HEK293 (cell line): ENCODE measurements at regions of chr4 and their contacts with region 1.

Region 1: DNA sequence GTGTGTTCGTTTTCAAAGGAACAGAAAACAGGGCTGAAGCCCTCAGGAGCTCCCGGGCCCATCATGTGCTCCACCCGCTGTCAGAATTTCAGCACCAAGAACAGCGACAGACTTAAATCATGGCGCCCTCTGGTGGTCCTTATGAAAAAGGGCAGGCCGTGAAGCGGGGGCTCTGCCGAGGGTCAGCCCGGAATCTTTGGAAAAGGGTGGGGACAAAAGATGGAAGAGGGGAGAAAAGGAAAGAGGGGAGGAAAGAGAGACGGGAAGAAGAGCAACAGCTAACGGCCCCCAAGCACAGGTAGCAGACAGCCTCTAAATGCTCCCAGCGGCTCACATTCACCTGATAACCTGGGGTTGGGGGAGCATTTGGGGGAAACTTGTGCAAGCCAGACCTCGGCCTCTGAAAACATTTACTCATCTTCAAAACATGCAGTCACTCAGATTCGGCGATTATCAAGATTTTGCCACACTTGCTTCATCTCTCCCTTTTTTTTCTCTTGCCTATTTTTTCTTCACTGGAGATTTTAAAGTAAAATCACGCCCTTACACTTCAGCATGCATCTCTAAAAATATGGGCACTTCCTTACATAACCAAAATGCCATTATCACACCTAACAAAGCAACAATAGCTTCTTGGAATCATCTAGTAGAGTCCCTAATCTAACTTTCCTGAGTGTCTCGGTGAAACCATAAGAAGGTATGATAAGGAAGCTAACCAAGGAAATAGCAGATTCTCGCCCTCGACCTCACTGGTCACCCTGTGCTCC is 28.1 kb upstream of the MAN2B2 start:
- H3K4me3 ChIP-seq: no peak overlapping the region
- H3K27ac ChIP-seq: no peak overlapping the region
- H3K4me1 ChIP-seq: no peaks in the 10 kb centered on the region
- CTCF ChIP-seq: peak; percentile 72

Region 2: DNA sequence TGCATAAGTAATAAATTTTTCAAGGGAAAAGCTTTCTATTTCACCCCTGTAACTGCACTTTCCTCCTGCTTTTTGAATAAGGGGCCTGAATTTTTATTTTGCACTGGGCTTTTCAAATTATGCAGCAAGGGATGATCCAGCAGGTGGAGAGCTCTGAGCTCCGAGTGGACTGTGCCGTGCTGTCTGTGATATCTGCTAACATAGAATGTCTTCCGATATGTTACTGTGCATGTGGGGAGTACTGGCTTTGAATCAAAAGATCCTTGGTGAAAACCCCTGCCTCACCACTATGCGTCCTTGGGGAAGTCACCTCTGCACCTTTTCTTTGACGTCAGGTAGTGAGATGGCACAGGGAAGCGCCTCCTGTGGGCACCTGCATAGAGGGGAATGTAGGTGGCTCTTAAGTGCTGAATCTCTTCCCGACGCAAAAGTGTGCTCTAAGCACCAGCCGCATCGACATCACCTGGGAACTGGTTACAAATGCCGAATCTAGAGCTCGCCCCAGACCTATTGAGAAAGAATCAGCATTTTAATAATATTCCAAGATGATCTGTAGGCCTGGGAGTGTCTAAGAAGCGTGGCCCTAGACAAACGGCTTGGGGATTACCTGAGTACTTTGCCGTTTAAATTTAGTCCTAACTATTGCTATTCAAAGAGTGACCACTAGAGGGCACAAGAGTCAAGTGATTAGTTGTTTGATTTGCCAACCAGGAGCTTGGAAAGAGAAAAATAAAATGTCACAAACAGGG is 296.5 kb before region 1 on chr4:
- CTCF ChIA-PET with region 1: interaction called, 16 read pairs
- POLR2A ChIA-PET with region 1: no interaction called
- H3K4me3 ChIP-seq: no peak overlapping the region
- H3K27ac ChIP-seq: no peak overlapping the region
- H3K4me1 ChIP-seq: no peaks in the 10 kb centered on the region
- CTCF ChIP-seq: peak; percentile 24; the same call in 1 of the 2 replicates

Region 3: DNA sequence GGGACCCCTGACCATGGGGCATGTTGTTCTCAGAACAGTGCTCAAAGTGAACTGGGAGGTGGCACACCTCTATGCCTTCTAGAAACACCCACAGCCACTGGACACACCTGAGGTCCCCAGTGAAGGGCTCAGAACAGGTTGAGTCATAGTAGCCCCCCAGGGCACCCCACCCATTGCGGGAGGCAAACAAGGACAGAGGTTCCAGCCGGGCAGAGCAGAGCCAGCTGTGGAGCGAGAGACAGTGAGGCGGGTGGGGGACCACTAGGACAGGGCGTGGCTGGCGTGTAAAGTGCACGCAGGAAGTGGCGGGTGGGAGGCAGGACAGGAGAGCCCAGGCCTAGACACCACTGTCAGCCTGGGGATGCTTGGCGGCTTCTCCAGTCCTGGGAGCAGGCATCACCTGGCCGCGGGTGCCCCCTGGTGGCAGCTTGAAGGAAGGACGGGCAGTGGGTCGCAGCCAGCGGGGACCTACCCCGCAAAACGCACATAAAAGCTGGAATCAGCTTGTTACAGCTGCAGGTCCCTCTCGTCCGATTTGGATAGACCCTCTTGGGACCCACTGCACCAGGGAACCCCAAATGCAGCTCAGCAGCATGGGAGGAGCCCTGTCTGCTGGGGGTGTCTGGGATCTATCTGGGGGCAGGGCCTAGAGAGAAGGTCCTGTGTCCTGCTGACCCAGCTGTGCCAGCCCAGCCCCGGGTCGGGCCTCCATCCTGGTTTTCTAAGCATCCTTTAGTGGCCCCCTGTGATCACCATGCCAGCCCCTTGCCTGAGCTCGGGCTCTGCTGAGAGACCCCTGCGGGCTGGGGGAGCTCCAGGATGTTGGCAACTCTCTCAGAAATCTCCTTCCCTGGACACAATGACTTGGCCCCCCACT is 219.6 kb before region 1 on chr4:
- CTCF ChIA-PET with region 1: interaction called, 15 read pairs
- POLR2A ChIA-PET with region 1: no interaction called
- H3K4me3 ChIP-seq: no peak overlapping the region
- H3K27ac ChIP-seq: no peak overlapping the region
- H3K4me1 ChIP-seq: no peaks in the 10 kb centered on the region
- CTCF ChIP-seq: peak; percentile 87

Region 4: DNA sequence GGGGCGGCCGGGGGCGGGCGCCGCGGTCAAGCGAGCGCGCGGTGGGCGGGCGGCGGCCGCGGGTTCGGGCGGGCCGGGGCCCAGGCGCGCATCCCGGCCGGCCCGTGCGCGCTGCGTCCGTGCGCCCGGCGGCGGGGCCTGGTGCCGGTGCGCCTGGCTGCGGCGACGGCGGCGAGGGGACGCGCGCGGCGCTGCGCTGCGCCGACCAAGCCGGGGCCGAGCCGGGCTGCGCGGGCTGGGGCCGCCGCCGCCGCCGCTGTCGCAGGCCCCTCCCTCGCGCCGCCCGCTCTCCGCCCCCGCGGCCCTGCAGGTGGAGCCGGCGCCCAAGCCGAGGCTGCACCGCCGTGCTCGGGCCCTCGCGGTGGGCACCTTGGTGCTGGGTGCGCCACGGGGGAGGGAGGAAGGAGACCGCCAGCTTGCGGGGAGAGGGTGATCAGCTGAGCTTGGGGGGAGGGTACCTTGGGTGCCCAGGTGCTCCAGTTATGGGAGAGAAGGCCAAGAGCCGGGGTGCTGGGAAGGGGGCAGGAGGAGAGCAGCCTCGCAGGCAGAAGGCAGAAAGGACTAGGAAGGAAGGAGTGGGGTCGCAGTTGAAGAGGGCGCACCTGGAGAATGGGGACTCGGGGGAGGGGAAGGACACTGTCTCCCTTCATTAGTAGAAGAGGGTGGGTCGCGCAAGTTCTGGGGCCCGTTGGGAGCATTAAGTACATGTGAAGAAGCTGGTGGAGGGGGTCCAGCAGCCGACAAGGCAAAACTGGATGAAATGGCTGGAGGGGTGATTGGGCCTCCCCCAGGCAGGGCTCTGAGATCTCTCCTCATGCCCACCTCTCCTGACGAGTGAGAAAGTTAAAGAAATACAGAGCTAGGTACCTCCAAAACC is 74.2 kb before region 1 on chr4 and contains the start of gene PPP2R2C:
- CTCF ChIA-PET with region 1: interaction called, 10 read pairs
- POLR2A ChIA-PET with region 1: no interaction called
- H3K4me3 ChIP-seq: peak within 1 kb of the TSS; percentile 54
- H3K27ac ChIP-seq: no peak within 1 kb of the TSS
- H3K4me1 ChIP-seq: no peaks in the 10 kb centered on the region
- CTCF ChIP-seq: no peak

Region 5: DNA sequence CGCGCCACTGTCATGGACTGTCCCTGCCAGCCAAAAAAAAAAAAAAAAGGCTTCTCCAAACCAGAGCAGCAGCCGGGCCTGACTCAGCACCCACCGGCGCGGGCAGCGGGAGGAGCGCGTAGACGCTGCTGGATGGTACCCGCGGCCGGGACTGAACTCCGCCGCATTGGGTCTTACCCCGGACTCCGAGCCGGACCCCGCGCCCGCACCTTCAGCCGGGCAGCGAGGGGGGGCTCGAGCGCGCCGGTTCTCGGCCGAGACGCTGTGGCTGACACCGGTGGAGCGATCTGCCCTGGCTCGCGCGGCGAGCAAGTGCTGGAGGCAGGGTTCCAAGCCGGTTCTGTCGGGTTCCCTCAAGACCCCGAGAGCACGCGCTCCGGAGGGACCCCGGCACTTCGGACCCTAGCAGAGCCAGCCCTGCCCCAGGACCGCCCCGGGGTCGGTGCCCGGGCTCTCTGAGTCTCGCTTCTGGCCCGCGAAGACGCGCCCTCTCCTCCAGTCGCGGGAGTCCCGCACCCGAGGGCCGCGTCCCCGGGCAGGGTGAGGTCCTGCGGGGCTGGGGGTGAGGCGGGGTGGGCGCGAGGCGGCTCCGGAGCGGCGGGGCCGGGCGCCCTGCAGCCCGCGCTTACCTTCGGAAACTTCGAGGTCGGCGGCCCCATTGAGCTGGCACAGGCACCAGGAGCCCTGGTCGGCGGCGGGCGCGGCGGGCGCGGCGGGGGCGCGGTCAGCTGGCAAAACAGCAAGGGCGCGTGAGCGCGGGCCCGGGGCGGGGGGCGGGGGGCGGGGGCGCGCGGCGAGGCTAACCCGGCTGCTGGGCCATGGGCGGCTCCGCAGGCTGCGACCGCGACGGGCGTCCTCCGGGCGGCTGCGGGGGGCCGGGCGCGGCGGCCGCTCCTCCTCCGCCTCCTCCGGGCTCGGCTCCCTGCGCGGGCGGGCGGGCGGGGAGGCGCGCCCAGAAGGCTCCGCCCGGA is 16.4 kb after region 1 on chr4:
- CTCF ChIA-PET with region 1: interaction called, 12 read pairs
- POLR2A ChIA-PET with region 1: no interaction called
- H3K4me3 ChIP-seq: peak overlapping the region; percentile 14
- H3K27ac ChIP-seq: no peak overlapping the region
- H3K4me1 ChIP-seq: no peaks in the 10 kb centered on the region
- CTCF ChIP-seq: no peak